GM12878 (cell line): ENCODE measurements at regions of chr13 and their contacts with region 1.

Region 1: GRCh38 chr13:41054212-41054877 is 7.0 kb upstream of the WBP4 start:
- DNase-seq: peak; percentile 37
- ATAC-seq: peak; percentile 63
- H3K4me3 ChIP-seq: peak overlapping the region; percentile 22; the same call in 1 of the 2 replicates
- H3K27ac ChIP-seq: peak overlapping the region; percentile 40; the same call in 1 of the 2 replicates
- H3K4me1 ChIP-seq: peaks cover 6% of the 10 kb centered on the region; the same call in 1 of the 2 replicates
- H3K27me3 ChIP-seq: no peaks in the 10 kb centered on the region
- CTCF ChIP-seq: peak; percentile 38 to 66 (median 54); a peak in 5 of 6 replicates
- EP300 ChIP-seq: no peak
- POLR2A ChIP-seq: no peak
- RAD21 ChIP-seq: peak; percentile 59

Region 2: GRCh38 chr13:40982772-40983171 is 71.6 kb before region 1 on chr13:
- CTCF ChIA-PET with region 1: interaction called, 22 read pairs
- POLR2A ChIA-PET with region 1: interaction called, 4 read pairs
- RAD21 ChIA-PET with region 1: interaction called, 172 read pairs
- SMC1A ChIA-PET with region 1: interaction called, 42 read pairs
- in situ Hi-C with region 1: loop called (anchors 5 kb)
- intact Hi-C with region 1: no loop called
- DNase-seq: peak; percentile 84
- ATAC-seq: peak; percentile 53
- H3K4me3 ChIP-seq: peak overlapping the region; percentile 16; the same call in 1 of the 2 replicates
- H3K27ac ChIP-seq: peak overlapping the region; percentile 82
- H3K4me1 ChIP-seq: peaks cover 16% of the 10 kb centered on the region
- H3K27me3 ChIP-seq: no peaks in the 10 kb centered on the region
- CTCF ChIP-seq: no peak
- EP300 ChIP-seq: peak; percentile 22 to 59; a peak in 1 of 4 replicates
- POLR2A ChIP-seq: no peak
- RAD21 ChIP-seq: no peak

Region 3: DNA sequence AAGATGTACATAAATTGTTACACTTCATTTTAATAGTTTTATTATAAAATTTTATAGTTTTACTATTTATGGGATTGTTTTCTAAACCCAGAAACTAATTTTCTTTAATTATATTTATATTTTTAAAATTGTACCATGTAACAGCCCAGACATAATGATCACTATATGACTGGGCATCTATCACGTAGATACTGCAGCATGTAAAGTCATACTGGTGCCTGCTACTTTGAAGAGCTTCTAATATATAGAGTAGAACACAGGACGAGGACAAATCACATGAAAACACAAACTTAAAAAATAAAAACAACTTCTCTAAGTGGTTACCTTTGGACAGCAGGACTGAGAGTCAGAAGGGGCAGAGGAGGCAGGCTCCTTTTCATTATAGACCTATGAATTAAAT is 40.5 kb before region 1 on chr13:
- CTCF ChIA-PET with region 1: interaction called, 129 read pairs
- POLR2A ChIA-PET with region 1: interaction called, 25 read pairs
- RAD21 ChIA-PET with region 1: interaction called, 61 read pairs
- SMC1A ChIA-PET with region 1: interaction called, 70 read pairs
- in situ Hi-C with region 1: no loop called
- intact Hi-C with region 1: loop called (anchors 5 kb)
- DNase-seq: no peak
- ATAC-seq: peak; percentile 46
- H3K4me3 ChIP-seq: peak overlapping the region; percentile 75
- H3K27ac ChIP-seq: no peak overlapping the region
- H3K4me1 ChIP-seq: peaks cover 18% of the 10 kb centered on the region
- H3K27me3 ChIP-seq: no peaks in the 10 kb centered on the region
- CTCF ChIP-seq: no peak
- EP300 ChIP-seq: no peak
- POLR2A ChIP-seq: no peak
- RAD21 ChIP-seq: no peak

Region 4: DNA sequence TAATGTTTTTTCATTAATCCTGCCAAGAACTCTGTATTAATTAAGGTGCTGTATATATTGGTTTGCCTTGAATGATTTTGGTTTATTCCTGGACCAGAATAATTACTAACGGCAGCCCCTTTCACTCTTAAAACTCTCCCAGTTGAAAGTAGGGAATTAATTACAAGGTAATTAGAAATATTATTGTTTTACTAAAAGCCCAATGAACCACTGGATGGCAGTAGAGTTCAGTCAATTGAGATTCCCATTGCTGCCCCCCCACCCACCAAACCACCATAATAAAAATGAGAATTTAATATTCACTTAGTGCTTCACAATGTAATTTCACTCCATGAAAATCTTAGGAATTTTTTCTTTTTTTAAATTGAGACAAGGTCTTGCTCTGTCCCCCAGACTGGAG is 20.7 kb after region 1 on chr13:
- CTCF ChIA-PET with region 1: interaction called, 33 read pairs
- POLR2A ChIA-PET with region 1: no interaction called
- RAD21 ChIA-PET with region 1: interaction called, 11 read pairs
- SMC1A ChIA-PET with region 1: interaction called, 6 read pairs
- in situ Hi-C with region 1: no loop called
- intact Hi-C with region 1: no loop called
- DNase-seq: no peak
- ATAC-seq: peak; percentile 48
- H3K4me3 ChIP-seq: no peak overlapping the region
- H3K27ac ChIP-seq: no peak overlapping the region
- H3K4me1 ChIP-seq: no peaks in the 10 kb centered on the region
- H3K27me3 ChIP-seq: no peaks in the 10 kb centered on the region
- CTCF ChIP-seq: peak; percentile 36 to 66 (median 37); a peak in 5 of 6 replicates
- EP300 ChIP-seq: no peak
- POLR2A ChIP-seq: no peak
- RAD21 ChIP-seq: peak; percentile 73

Region 5: GRCh38 chr13:41111454-41111853 is 57.1 kb after region 1 on chr13:
- CTCF ChIA-PET with region 1: no interaction called
- POLR2A ChIA-PET with region 1: no interaction called
- RAD21 ChIA-PET with region 1: no interaction called
- SMC1A ChIA-PET with region 1: no interaction called
- in situ Hi-C with region 1: no loop called
- intact Hi-C with region 1: no loop called
- DNase-seq: no peak
- ATAC-seq: no peak
- H3K4me3 ChIP-seq: no peak overlapping the region
- H3K27ac ChIP-seq: no peak overlapping the region
- H3K4me1 ChIP-seq: no peaks in the 10 kb centered on the region
- H3K27me3 ChIP-seq: no peaks in the 10 kb centered on the region
- CTCF ChIP-seq: no peak
- EP300 ChIP-seq: no peak
- POLR2A ChIP-seq: no peak
- RAD21 ChIP-seq: no peak

Region 6: GRCh38 chr13:41222259-41222852 is 168.0 kb after region 1 on chr13:
- CTCF ChIA-PET with region 1: interaction called, 45 read pairs
- POLR2A ChIA-PET with region 1: interaction called, 4 read pairs
- RAD21 ChIA-PET with region 1: interaction called, 7 read pairs
- SMC1A ChIA-PET with region 1: interaction called, 10 read pairs
- in situ Hi-C with region 1: no loop called
- intact Hi-C with region 1: loop called (anchors 1 kb)
- DNase-seq: peak; percentile 34
- ATAC-seq: peak; percentile 99
- H3K4me3 ChIP-seq: no peak overlapping the region
- H3K27ac ChIP-seq: no peak overlapping the region
- H3K4me1 ChIP-seq: no peaks in the 10 kb centered on the region
- H3K27me3 ChIP-seq: no peaks in the 10 kb centered on the region
- CTCF ChIP-seq: peak; percentile 77 to 86 (median 77)
- EP300 ChIP-seq: no peak
- POLR2A ChIP-seq: no peak
- RAD21 ChIP-seq: peak; percentile 82